ENCODE measurements at regions of chr1 and their contacts with region 1.

Region 1: DNA sequence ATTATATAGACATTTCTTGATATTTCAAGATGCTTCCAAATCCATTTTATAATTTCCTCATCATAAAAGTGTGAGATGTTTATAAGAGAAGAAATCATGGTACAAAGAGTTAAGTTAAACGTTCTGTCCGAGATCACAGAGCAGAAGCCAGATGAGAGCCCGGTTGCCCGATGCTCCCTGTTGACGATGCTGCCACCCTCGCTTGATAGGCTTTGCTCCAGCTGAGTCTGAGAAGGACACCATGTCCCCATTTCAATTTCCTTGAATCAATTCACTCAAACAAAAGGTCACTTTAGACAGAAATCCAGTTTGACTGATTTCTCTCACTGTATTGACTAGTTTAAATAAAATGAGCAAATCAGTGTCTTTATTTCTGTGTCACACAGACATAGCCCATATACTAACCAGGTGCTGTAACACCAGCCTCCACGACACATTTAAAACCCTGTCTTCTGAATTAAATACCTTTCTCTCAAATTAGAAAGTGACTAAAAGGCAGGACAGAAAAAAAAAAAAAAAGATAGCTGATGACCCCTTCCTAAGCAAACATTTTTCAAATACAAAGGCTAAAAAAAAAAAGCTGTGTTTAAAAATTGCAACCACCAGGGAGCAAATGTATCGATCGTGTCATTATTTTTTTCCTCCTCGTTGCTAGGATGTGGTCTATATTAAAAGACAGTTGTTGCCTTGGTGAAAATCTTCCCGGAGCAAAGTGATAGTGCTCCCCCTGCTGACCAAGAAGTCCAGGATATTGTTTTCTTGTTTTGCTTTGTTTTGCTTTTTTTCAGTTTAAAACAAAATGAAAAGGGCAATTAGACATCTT is 35.2 kb downstream of the DNASE2B start:
- DNase-seq: peak; percentile 73
- H3K4me3 Mint-ChIP-seq: peak overlapping the region; percentile 55
- H3K27ac Mint-ChIP-seq: no peak overlapping the region
- H3K4me1 Mint-ChIP-seq: peaks cover 10% of the 10 kb centered on the region
- H3K27me3 Mint-ChIP-seq: no peaks in the 10 kb centered on the region

Region 2: GRCh38 chr1:84143796-84144565 is 289.5 kb before region 1 on chr1 and contains the start of gene PRKACB:
- CTCF ChIA-PET with region 1: interaction called, 54 read pairs
- DNase-seq: peak; percentile 21
- H3K4me3 Mint-ChIP-seq: peak within 1 kb of the TSS; percentile 99
- H3K27ac Mint-ChIP-seq: peak within 1 kb of the TSS; percentile 97
- H3K4me1 Mint-ChIP-seq: peaks cover 36% of the 10 kb centered on the region
- H3K27me3 Mint-ChIP-seq: no peaks in the 10 kb centered on the region

Region 3: DNA sequence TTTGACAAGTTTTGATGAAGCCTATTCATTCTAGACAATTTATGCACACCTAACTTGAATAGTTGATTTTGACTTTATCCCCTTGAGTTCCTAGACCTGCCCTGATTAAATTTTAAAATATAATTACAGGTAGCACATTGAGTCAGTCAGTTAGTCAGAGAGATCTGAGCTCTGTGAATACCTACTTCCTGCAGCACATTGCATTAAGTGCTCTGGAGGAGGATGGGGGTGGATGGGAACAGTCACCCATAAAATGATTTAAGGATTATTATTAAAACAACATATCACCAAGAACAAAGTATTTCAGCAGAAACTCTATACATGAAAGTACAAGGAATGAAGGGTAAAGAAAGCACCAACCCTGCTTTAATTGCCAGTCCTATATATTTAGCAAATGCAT is 33.8 kb after region 1 on chr1:
- CTCF ChIA-PET with region 1: no interaction called
- DNase-seq: no peak
- H3K4me3 Mint-ChIP-seq: no peak overlapping the region
- H3K27ac Mint-ChIP-seq: no peak overlapping the region
- H3K4me1 Mint-ChIP-seq: no peaks in the 10 kb centered on the region
- H3K27me3 Mint-ChIP-seq: peaks cover 15% of the 10 kb centered on the region

Region 4: DNA sequence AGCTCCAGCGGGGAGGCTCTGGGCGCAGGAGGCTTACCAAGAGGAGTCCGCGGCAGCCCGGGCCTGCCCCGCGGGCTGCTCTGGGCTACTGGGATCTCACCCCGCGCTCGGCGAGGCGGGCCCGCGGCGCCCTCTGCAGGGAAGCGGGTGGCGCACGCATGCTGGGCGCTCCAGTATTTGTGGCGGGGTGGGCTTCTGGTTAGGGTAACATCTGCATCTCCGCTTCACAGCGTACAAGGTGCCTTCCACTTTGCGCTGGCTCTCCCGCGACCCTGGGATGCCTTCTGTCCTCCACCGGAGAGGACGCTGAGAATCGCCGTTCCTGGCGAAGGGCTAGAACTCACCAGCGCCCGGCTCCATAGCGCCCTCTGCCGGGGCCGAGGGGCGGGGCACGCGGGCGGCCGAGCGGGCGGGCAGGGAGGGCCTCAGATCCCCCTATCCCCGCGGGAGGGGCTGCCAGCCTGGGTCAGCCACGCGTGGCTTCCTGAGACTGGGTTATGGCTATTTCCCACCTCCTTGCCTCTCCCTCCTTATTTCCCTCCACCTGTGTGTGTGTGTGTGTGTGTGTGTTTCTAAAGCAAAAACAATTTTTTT is 187.3 kb after region 1 on chr1:
- CTCF ChIA-PET with region 1: interaction called, 14 read pairs
- DNase-seq: peak; percentile 82
- H3K4me3 Mint-ChIP-seq: peak overlapping the region; percentile 87
- H3K27ac Mint-ChIP-seq: peak overlapping the region; percentile 85
- H3K4me1 Mint-ChIP-seq: peaks cover 14% of the 10 kb centered on the region
- H3K27me3 Mint-ChIP-seq: peaks cover 14% of the 10 kb centered on the region

Region 5: DNA sequence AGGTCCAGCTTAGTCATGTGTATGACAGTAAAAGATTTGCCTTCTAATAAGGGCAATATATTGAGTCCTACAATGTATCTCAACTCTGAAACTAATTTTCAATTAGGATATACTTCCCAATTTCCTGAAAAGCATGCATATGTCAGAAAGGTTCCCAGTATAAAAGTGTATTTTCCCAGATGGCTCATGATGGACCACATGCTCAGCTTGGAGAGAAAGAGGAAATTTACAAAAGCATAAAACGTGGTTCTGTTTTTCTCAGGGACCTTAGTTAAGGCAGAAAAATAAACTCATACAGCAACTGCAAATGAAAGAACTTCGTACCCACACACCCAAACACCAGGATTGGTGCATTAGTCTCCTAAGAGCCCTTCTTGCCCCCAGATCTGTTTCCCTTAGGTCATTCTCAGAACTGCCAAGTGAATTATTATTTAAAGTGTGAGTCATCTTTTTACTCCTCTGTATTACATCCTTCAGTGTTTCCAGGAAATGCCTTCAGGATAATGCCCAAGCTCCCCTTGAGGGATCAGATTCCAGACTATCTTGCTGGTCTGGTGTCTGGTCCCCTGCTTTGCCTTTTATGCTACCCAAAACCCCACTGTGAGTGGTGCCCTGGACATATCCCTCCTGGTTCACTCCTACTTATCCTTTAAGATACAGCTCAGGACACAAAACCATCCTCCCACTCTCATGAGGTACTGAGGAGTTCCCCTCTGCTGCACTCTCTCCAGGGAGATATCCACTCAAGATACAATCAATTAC is 199.4 kb after region 1 on chr1:
- CTCF ChIA-PET with region 1: no interaction called
- DNase-seq: no peak
- H3K4me3 Mint-ChIP-seq: no peak overlapping the region
- H3K27ac Mint-ChIP-seq: no peak overlapping the region
- H3K4me1 Mint-ChIP-seq: peaks cover 7% of the 10 kb centered on the region
- H3K27me3 Mint-ChIP-seq: no peaks in the 10 kb centered on the region

Measured in activated naive CD4-positive, alpha-beta T cell treated with anti-CD3 and anti-CD28 coated beads, Interleukin-2, amount 10 ng/mL, durations not matched to agents 7 days and 5 days (primary cell).